ENCODE measurements at regions of chr7 and their contacts with region 1.

Region 1: DNA sequence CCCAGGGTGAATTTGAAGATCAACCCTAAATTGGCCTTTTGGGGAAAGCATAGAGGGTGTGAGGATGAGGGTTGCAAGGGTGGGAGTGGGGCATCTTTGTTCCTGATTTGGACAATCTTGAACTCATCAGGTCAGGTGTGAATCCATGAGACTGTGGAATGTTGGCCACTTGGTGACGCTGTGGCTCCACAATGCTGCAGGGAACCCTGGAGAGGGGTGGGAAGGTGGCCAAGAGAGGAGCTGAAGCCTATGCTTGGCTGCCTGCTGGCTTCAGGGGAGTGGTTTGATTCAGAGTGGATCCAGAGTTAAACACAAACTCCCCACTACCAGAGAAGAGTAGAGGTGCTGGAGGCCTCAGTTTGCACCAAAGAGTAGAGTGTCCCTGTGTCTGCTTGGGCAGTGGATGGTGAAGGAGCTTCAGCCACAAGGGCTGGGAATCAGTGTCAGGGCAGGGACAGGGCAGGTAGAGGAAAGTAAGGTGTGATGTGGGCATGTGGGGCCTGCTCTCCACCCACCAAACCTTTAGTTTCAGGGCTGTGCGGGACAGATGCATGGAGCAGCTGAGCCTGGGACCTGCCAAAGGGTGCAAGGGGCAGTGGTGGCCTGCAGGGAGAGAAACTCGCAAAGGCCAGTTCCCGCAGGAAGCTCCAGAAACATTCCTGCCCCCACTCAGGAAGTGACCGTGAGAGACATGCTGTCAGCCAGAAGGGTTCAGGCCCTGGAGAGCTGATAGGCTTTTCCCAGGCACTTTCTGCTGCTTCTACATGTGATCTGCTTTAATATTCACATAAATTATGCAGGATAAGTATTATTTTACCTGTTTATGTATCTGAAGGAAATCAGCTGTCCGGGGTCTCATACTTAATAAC is 81.0 kb upstream of the PRSS58 start:
- DNase-seq: no peak
- H3K4me3 ChIP-seq: no peak overlapping the region
- H3K27me3 ChIP-seq: no peaks in the 10 kb centered on the region
- CTCF ChIP-seq: no peak

Region 2: DNA sequence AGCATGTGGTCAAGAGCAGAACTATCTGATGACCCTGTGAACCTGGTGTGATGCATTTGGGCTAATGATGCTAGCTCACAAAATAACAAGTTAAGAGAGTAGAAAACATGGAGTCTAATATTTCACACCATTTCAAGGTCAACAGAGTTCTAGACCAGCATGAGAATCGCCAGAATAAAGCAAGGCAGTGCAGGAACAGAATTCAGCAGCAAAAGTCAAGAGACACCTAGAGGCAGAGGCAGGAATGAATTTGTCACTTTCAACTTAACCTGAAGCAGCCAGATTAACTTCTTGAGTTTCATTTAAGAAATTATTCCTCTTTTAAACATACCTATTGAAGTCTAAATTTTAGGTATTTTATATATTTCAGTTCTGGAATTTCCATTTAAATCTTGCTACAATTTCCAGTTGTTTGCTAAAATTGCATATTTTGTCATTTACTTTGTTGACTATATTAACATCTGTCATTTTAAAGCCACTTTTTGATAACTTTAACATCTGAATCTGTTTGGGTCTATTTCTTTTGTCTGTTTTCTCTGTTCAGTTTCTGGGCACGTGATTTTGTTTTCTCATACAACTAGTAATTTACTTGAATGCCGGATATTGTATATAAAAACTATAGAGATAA is 36.8 kb before region 1 on chr7:
- CTCF ChIA-PET with region 1: interaction called, 11 read pairs
- POLR2A ChIA-PET with region 1: no interaction called
- DNase-seq: no peak
- H3K4me3 ChIP-seq: no peak overlapping the region
- H3K27me3 ChIP-seq: no peaks in the 10 kb centered on the region
- CTCF ChIP-seq: 0 out of 2 replicates have a peak, but pooled peaks have one; percentile 20

Measured in BJ (cell line).